Activated CD8-positive, alpha-beta memory T cell treated with anti-CD3 and anti-CD28 coated beads, Interleukin-2, amount 10 ng/mL, durations not matched to agents 7 days and 5 days (primary cell): ENCODE measurements at regions of chr1 and their contacts with region 1.

Region 1: DNA sequence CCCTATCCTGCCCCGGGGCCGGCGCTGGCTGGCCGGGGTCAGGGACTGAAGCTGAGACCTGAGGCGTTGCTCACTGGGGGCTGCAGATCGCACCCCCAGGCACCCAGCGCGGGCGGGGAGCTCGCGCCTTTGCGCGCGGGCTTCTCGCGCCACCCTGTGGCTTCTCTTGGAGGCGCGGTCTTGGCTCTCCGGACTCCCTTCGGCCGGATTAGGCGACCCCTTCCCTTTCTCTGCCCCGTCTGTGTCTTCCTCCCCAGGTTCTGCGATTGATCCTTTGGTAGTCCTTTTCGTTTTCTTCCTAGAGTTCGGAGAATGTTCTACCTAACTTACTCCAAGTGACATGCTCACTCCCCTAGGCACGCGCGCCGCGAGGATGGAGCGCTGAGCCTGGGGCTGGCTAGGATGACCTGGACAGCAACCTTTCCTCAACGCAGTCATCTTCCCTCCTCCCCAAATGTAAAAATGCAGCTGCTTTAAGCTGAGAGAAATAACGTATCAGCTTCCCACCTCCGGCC is 495 bp upstream of the NTRK1 start:
- DNase-seq: peak; percentile 69
- ATAC-seq: peak; percentile 65
- H3K4me3 Mint-ChIP-seq: peak overlapping the region; percentile 72
- H3K27ac Mint-ChIP-seq: no peak overlapping the region
- H3K4me1 Mint-ChIP-seq: peaks cover 43% of the 10 kb centered on the region
- H3K27me3 Mint-ChIP-seq: peaks cover 42% of the 10 kb centered on the region

Region 2: GRCh38 chr1:156659994-156660751 is 200.0 kb before region 1 on chr1:
- CTCF ChIA-PET with region 1: interaction called, 10 read pairs
- DNase-seq: peak; percentile 97
- ATAC-seq: peak; percentile 81
- H3K4me3 Mint-ChIP-seq: peak overlapping the region; percentile 82
- H3K27ac Mint-ChIP-seq: peak overlapping the region; percentile 95
- H3K4me1 Mint-ChIP-seq: peaks cover 68% of the 10 kb centered on the region
- H3K27me3 Mint-ChIP-seq: peaks cover 24% of the 10 kb centered on the region

Region 3: GRCh38 chr1:156751758-156752757 is 108.1 kb before region 1 on chr1:
- CTCF ChIA-PET with region 1: interaction called, 12 read pairs
- DNase-seq: peak; percentile 98
- ATAC-seq: peak; percentile 84
- H3K4me3 Mint-ChIP-seq: peak overlapping the region; percentile 98
- H3K27ac Mint-ChIP-seq: peak overlapping the region; percentile 93
- H3K4me1 Mint-ChIP-seq: peaks cover 42% of the 10 kb centered on the region
- H3K27me3 Mint-ChIP-seq: no peaks in the 10 kb centered on the region

Region 4: DNA sequence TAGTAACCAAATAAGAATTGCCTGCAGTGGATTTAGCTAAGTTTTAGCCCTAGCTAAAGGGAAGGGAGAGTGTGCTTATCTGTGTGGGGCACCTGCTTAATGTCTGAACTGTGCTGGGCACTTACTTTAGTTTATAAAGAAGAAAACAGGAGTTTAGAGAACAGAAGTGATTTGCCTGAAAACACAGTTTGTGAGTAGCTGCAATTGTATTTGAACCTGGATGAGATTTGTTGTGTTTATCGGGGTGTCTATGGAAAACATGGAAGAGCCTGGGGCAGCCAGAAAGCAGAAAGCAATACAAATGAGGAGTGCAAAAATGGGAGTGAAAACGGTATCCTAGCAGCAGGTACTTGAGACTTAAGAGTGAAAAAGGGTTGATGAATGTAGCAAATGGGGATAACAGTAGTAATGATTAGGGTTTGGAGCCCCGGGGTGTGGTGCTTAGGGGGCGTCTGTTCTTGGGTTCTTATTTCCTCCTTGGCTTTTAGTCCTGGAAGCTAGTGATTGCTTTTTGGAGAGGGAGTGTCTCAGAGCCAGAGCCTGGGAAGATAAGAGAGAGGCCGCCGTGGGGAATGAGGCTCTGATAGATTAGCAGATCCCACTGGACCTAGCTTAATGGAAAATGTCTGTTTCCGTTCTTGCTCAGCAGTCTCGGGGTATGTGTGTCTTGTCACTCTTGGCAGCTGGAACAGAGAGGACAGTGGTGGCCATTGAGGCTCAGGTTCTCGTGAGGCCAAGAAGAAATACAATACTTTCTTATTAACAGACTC is 87.3 kb before region 1 on chr1:
- CTCF ChIA-PET with region 1: interaction called, 28 read pairs
- DNase-seq: no peak
- ATAC-seq: peak; percentile 4
- H3K4me3 Mint-ChIP-seq: no peak overlapping the region
- H3K27ac Mint-ChIP-seq: peak overlapping the region; percentile 3
- H3K4me1 Mint-ChIP-seq: peaks cover 67% of the 10 kb centered on the region
- H3K27me3 Mint-ChIP-seq: no peaks in the 10 kb centered on the region

Region 5: DNA sequence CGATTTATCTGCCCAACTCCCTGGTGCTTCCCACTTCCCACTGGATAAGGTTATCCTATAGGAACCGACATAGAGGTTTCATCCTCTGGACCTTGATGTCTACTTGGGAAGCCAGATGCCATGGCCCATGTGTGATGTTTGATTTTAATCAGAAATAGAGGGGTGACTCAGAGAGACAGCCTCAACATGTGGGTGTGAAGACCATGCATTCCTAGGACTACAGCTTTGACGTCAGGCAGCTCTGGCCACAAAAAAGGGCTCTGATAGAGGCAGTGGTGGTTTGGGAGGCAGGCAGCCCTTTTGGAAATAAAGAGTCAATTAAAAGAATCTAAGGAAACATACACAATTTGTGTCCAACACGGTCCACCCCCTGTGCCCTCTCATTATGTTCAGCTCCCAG is 38.4 kb before region 1 on chr1:
- CTCF ChIA-PET with region 1: interaction called, 600 read pairs
- DNase-seq: peak; percentile 59
- ATAC-seq: peak; percentile 62
- H3K4me3 Mint-ChIP-seq: no peak overlapping the region
- H3K27ac Mint-ChIP-seq: no peak overlapping the region
- H3K4me1 Mint-ChIP-seq: peaks cover 34% of the 10 kb centered on the region
- H3K27me3 Mint-ChIP-seq: no peaks in the 10 kb centered on the region

Region 6: GRCh38 chr1:156884560-156885184 is 24.5 kb after region 1 on chr1:
- CTCF ChIA-PET with region 1: interaction called, 105 read pairs
- DNase-seq: no peak
- ATAC-seq: no peak
- H3K4me3 Mint-ChIP-seq: no peak overlapping the region
- H3K27ac Mint-ChIP-seq: no peak overlapping the region
- H3K4me1 Mint-ChIP-seq: peaks cover under 1% of the 10 kb centered on the region
- H3K27me3 Mint-ChIP-seq: peaks cover 38% of the 10 kb centered on the region

Region 7: GRCh38 chr1:156927215-156928042 is 67.3 kb after region 1 on chr1:
- CTCF ChIA-PET with region 1: interaction called, 13 read pairs
- DNase-seq: peak; percentile 75
- ATAC-seq: peak; percentile 79
- H3K4me3 Mint-ChIP-seq: no peak overlapping the region
- H3K27ac Mint-ChIP-seq: no peak overlapping the region
- H3K4me1 Mint-ChIP-seq: peaks cover 33% of the 10 kb centered on the region
- H3K27me3 Mint-ChIP-seq: peaks cover 95% of the 10 kb centered on the region

Region 8: DNA sequence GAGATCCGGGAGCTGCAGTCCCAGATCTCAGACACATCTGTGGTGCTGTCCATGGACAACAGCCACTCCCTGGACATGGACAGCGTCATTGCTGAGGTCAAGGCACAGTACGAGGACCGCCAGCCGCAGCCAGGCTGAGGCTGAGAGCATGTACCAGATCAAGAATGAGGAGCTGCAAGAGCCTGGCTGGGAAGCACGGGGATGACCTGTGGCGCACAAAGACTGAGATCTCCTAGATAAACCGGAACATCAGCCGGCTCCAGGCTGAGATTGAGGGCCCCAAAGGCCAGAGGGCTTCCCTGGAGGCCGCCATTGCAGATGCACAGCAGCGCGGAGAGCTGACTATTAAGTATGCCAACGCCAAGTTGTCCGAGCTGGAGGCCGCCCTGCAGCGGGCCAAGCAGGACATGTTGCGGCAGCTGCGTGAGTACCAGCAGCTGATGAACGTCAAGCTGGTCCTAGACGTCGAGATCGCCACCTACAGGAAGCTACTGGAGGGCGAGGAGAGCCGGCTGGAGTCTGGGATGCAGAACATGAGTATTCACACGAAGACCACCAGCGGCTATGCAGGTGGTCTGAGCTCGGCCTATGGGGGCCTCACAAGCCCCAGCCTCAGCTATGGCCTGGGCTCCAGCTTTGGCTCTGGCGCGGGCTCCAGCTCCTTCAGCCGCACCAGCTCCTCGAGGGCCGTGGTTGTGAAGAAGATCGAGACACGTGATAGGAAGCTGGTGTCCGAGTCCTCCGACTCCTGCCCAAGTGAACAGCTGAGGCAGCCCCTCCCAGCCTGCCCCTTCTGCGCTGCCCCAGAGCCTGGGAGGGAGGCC is 214.0 kb after region 1 on chr1:
- CTCF ChIA-PET with region 1: no interaction called
- DNase-seq: peak; percentile 61
- ATAC-seq: no peak
- H3K4me3 Mint-ChIP-seq: no peak overlapping the region
- H3K27ac Mint-ChIP-seq: no peak overlapping the region
- H3K4me1 Mint-ChIP-seq: no peaks in the 10 kb centered on the region
- H3K27me3 Mint-ChIP-seq: peaks cover 30% of the 10 kb centered on the region